Right cardiac atrium (tissue), 5 donors: ENCODE measurements at regions of chr20 and their contacts with region 1.

Region 1: DNA sequence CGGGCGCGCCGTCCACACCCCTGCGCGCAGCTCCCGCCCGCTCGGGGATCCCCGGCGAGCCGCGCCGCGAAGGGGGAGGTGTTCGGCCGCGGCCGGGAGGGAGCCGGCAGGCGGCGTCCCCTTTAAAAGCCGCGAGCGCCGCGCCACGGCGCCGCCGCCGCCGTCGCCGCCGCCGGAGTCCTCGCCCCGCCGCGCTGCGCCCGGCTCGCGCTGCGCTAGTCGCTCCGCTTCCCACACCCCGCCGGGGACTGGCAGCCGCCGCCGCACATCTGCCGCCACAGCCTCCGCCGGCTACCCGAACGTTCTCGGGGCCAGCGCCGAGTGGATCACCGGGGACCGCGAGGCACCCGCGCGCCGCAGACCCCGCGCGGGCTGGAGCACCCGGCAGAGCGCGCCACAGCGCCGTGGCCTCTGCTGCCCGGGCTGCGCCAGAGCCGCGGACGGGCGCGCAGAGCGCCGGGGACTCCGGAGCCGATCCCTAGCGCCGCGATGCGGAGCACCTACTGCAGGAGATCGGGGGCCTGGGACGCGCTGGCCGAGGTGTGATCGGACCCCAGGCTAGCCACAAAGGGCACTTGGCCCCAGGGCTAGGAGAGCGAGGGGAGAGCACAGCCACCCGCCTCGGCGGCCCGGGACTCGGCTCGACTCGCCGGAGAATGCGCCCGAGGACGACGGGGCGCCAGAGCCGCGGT is at the start of gene BMP2:
- DNase-seq: peak; percentile 70 to 87 (median 85)
- ATAC-seq: peak; percentile 83 to 90
- H3K4me3 ChIP-seq: peak within 1 kb of the TSS; percentile 78
- H3K27ac ChIP-seq: peak within 1 kb of the TSS; percentile 69
- H3K4me1 ChIP-seq: no peaks in the 10 kb centered on the region
- H3K27me3 ChIP-seq: no peaks in the 10 kb centered on the region
- total RNA-seq, gene BMP2: 1.5 to 2.7 (median 2.4) TPM

Region 2: DNA sequence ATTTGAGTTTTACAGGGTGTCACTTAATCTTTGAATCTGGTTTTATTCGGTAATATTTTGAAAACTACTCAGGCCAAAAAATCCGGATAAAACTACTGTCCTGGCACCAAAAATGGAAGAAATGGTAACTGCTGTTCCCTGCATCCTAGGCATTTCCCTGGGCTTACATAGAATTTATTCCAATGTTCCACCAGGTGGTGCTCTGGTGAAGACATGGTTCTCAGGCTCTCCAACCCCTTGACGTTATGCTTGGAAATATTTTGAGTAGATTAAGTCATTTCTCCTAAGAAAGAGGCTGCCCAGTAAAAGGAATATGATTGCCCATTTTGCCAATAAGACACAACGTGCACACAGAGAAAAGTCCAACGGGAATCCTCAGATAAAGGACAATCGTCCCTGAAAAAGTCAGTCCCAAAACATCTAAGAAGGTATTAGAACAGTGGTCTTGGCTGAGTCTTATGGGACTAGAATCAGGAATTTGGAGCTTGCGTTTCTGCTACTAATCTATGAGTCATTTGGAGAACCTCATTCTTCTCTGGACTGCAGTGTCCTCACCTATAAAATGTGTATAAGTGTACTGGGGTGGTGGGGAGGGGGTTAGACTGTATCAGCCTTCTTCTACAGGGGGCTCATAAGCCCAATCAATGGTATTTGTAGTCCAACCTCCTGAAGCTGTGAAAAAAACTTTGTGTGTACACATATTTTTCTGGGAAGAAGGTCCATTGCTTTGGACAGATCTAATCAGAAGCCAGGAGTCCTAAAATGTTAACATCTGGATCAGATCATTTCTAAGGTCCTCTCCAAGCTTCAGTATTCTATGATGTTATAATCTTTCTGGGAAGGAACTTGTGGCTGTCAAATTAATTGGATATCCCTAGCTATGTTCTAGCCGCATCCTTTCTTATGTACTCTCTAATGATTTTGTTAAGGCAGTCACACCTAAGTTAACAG is 131.2 kb before region 1 on chr20:
- intact Hi-C with region 1: loop called in 2 of 4 experiments (anchors 10 kb)
- DNase-seq: no peak
- ATAC-seq: peak; percentile 85 to 88
- H3K4me3 ChIP-seq: no peak overlapping the region
- H3K27ac ChIP-seq: no peak overlapping the region
- H3K4me1 ChIP-seq: peaks cover 3% of the 10 kb centered on the region
- H3K27me3 ChIP-seq: no peaks in the 10 kb centered on the region

Region 3: GRCh38 chr20:6651016-6651415 is 116.7 kb before region 1 on chr20:
- intact Hi-C with region 1: no loop called
- DNase-seq: peak in 1 of 3 donors; percentile 16
- ATAC-seq: no peak
- H3K4me3 ChIP-seq: no peak overlapping the region
- H3K27ac ChIP-seq: no peak overlapping the region
- H3K4me1 ChIP-seq: no peaks in the 10 kb centered on the region
- H3K27me3 ChIP-seq: no peaks in the 10 kb centered on the region

Region 4: GRCh38 chr20:6828794-6829423 is 61.2 kb after region 1 on chr20:
- intact Hi-C with region 1: loop called in 1 of 4 experiments (anchors 10 kb)
- DNase-seq: peak; percentile 53 to 68 (median 58)
- ATAC-seq: peak; percentile 87 to 91
- H3K4me3 ChIP-seq: no peak overlapping the region
- H3K27ac ChIP-seq: no peak overlapping the region
- H3K4me1 ChIP-seq: no peaks in the 10 kb centered on the region
- H3K27me3 ChIP-seq: no peaks in the 10 kb centered on the region